Heart right ventricle (tissue), 16 donors: ENCODE measurements at regions of chr4 and their contacts with region 1.

Region 1: DNA sequence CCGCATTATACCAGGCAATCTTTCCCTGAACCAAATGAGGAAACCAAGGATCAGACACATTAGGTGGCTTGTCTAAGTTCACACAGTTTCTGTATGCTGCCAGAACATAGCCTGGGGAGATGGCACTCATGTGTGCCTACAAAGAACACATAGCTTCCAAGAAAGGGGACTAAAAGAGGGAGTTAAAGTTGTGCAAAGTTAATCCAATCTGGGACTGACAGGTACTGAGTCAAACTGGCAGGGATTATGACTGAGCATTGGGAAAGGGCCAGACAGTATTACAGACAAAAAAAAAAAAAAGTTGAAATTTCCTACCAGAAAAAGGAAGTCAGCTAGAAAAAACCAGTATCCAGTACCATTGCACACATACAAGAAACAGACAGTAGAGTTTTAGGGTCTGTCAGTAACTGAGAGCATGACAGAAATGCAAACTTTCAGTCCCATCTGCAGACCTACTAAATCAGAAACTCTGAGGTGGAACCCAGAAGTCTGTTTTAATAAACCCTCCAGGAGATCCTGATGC is 37.2 kb downstream of the ADAMTS3 start:
- DNase-seq: no peak
- ATAC-seq: no peak
- H3K4me3 ChIP-seq: no peak overlapping the region
- H3K27ac ChIP-seq: no peak overlapping the region
- H3K4me1 ChIP-seq: no peaks in the 10 kb centered on the region
- H3K27me3 ChIP-seq: no peaks in the 10 kb centered on the region
- CTCF ChIP-seq: no peak

Region 2: DNA sequence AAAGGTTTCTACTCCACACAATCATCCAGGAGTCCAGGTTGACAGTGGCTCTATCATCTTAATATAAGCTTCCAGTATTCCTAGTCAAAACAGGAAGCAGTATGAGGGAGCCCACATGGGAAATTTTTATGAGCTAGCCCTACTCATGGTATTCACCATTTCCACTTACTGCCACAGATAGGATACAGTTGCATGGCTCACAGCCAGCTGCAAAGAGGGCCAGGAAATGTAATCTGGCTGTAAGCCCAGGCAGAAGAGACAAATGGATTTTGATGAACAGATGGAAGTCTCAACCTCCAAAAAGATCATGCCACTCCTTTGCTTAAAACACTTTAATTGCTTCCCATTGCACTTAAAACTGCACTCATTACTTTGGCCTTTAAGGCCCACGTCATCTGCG is 113.4 kb before region 1 on chr4:
- intact Hi-C with region 1: no loop called
- DNase-seq: peak; percentile 35 to 45
- ATAC-seq: peak in 7 of 8 donors; percentile 51 to 92 (median 57)
- H3K4me3 ChIP-seq: no peak overlapping the region
- H3K27ac ChIP-seq: no peak overlapping the region
- H3K4me1 ChIP-seq: peaks cover 0 to 11% (median 8%) of the 10 kb centered on the region in 9 donors
- H3K27me3 ChIP-seq: no peaks in the 10 kb centered on the region
- CTCF ChIP-seq: no peak

Region 3: DNA sequence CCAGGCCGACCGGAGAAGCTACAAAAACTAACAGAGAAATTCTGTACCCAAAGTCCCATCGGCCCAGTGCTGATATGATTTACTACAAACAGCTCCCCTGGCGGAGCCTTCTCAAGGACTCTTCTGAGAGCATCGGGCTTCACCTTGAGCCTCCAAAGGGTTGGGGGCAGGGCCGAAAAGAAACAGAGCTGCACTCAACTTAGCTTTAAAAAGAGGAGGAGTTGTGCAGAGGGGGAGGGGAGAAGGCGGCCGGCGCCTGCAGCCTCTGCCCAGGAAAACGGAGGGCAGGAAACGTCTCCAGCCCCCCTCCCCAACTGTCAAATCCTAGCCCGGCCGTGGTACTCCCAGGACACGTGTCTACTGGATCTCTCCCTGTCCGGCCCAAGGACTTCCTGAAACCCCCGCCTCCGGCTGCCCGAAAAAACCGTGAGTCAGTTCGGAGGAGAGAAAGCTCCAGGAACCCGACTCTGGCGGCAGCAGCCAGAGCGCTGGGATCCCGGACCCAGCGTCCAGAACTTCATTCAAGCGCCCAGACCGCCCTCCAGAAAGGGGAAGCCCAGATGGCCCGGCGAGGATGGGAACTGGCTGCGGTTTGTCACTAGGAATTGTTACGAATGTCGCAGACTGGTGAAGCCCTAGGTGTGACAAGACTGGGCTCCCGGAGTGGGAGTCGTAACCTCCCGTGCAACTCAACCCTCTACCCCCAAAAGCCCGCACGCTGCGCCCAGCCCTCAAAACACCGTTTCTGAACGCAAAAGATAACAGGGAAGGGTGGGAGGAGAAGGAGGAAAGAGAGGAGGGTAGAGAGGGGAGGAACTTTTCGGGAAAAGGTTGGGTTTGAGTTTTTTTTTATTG is 36.2 kb after region 1 on chr4:
- intact Hi-C with region 1: loop called in 1 of 10 experiments (anchors 2 kb)
- DNase-seq: peak; percentile 40 to 51
- ATAC-seq: peak; percentile 50 to 85 (median 76)
- H3K4me3 ChIP-seq: peak overlapping the region; percentile 36 to 77 (median 60)
- H3K27ac ChIP-seq: peak overlapping the region in 8 of 10 donors; percentile 33 to 73 (median 47)
- H3K4me1 ChIP-seq: peaks cover 0 to 24% (median 8%) of the 10 kb centered on the region in 9 donors
- H3K27me3 ChIP-seq: peaks cover 0 to 31% (median 0%) of the 10 kb centered on the region in 7 donors
- CTCF ChIP-seq: peak in 5 of 9 donors; percentile 24 to 40 (median 31)

Region 4: DNA sequence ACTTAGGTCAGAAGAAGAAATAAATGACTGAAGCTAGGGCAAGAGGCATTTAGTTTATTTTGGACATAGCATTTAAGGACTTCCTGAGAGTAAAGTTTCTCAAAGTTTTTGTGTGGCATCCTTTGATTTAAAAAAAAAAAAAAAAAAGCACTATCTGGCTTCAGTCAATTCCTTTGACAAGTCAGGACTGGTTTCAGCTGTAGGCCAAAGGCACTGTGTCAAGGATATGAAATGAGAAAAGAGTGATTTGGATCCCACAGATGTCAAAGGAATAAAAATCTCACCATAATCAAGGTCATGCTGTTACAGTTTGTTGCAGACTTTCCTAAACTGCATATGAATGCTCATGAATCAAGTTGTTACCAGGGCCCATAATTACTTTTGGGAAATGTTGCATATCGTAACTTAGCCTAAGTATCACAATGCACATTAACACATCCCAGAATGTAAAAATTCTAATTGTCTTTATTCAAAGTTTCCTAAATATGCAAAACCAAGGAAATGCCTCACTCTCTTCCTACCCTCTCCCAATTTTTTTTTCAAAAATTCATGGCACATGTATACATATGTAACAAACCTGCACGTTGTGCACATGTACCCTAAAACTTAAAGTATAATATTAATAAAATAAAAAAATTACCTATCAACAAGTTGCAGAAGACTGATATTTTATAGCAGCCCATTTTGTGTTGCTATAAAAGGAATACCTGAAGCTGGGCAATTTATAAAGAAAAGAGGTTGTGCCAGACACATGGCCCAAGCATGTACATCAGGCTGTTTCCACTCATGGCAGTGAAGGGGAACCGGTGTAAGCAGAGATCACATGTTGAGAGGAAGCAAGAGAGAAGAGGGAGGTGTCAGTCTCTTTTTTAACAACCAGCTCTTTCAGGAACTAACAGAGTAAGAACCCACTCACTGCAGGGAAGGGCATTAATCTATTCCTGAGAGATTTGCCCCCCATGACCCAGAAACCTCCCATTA is 70.9 kb after region 1 on chr4:
- intact Hi-C with region 1: no loop called
- DNase-seq: no peak
- ATAC-seq: no peak
- H3K4me3 ChIP-seq: no peak overlapping the region
- H3K27ac ChIP-seq: no peak overlapping the region
- H3K4me1 ChIP-seq: no peaks in the 10 kb centered on the region
- H3K27me3 ChIP-seq: no peaks in the 10 kb centered on the region
- CTCF ChIP-seq: no peak